Naive thymus-derived CD4-positive, alpha-beta T cell (primary cell): ENCODE measurements at regions of chr14 and their contacts with region 1.

Region 1: DNA sequence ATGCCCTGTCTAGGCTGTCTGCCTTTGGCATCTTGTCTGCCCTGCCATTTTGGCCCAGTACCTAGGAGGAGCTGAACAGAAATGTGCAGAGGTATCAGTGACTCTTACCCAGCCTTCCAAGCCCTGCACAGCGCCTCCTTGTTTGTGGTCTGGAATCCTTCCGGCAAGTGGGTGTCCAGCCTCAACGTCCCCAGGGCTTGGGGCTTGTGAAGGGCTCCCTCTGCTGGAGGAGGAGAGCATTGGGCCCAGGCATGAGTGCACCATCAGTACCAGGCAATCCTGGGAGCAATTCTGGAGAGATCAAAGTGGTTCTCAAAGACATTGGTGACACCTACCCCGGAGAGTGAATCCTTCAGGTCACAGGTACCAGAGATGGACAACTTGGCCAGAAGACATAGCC is 2.4 kb upstream of the TCL1B start:
- DNase-seq: peak in 4 of 9 donors; percentile 8 to 32 (median 18)
- ATAC-seq: peak; percentile 56
- H3K4me3 ChIP-seq: no peak overlapping the region
- H3K4me3 Mint-ChIP-seq: no peak overlapping the region
- H3K27ac ChIP-seq: no peak overlapping the region
- H3K27ac Mint-ChIP-seq: no peak overlapping the region
- H3K4me1 ChIP-seq: no peaks in the 10 kb centered on the region
- H3K4me1 Mint-ChIP-seq: no peaks in the 10 kb centered on the region
- H3K27me3 ChIP-seq: no peaks in the 10 kb centered on the region
- H3K27me3 Mint-ChIP-seq: peaks cover 4 to 34% (median 20%) of the 10 kb centered on the region in 5 donors

Region 2: DNA sequence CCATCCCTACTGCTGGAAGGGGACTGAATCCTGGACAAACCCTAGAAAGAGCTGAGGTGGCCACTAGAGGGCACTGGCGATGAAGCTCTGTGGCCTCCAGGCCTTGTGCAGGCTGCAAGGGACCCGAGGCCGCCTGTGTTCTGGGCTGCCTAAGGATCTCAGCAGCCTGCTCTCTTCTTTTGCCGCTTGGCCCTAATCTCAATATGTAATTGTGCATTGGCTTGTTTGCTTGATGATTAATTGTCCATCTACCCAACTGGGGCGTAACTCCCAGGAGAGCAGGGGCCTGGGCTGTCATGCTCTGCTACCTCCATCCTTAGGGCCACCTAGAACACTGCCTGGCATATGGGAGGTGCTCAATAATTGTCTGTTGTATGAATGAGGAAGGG is 241.2 kb before region 1 on chr14:
- CTCF ChIA-PET with region 1: no interaction called
- POLR2A ChIA-PET with region 1: no interaction called
- intact Hi-C with region 1: loop called in 1 of 2 experiments (anchors 5 kb)
- DNase-seq: peak; percentile 51 to 76 (median 68)
- ATAC-seq: peak; percentile 94
- H3K4me3 ChIP-seq: no peak overlapping the region
- H3K4me3 Mint-ChIP-seq: no peak overlapping the region
- H3K27ac ChIP-seq: no peak overlapping the region
- H3K27ac Mint-ChIP-seq: peak overlapping the region; percentile 3 to 77 (median 57)
- H3K4me1 ChIP-seq: no peaks in the 10 kb centered on the region
- H3K4me1 Mint-ChIP-seq: peaks cover 4 to 15% (median 5%) of the 10 kb centered on the region in 7 donors
- H3K27me3 ChIP-seq: no peaks in the 10 kb centered on the region
- H3K27me3 Mint-ChIP-seq: no peaks in the 10 kb centered on the region